ENCODE measurements at regions of chr16 and their contacts with region 1.

Region 1: GRCh38 chr16:57432989-57433388 is 14.2 kb downstream of the CIAPIN1 start:
- DNase-seq: peak in 2 of 9 donors; percentile 16 to 17
- ATAC-seq: no peak
- H3K4me3 ChIP-seq: no peak overlapping the region
- H3K4me3 Mint-ChIP-seq: peak overlapping the region in 8 of 10 donors; percentile 43 to 79 (median 70)
- H3K27ac ChIP-seq: peak overlapping the region; percentile 49
- H3K27ac Mint-ChIP-seq: peak overlapping the region in 8 of 9 donors; percentile 74 to 93 (median 88)
- H3K4me1 ChIP-seq: peaks cover 0 to 33% of the 10 kb centered on the region in 2 donors
- H3K4me1 Mint-ChIP-seq: peaks cover 0 to 48% (median 38%) of the 10 kb centered on the region in 7 donors
- H3K27me3 ChIP-seq: no peaks in the 10 kb centered on the region
- H3K27me3 Mint-ChIP-seq: no peaks in the 10 kb centered on the region

Region 2: GRCh38 chr16:57416122-57416509 is 16.9 kb before region 1 on chr16:
- CTCF ChIA-PET with region 1: interaction called, 43 read pairs
- POLR2A ChIA-PET with region 1: interaction called, 4 read pairs
- intact Hi-C with region 1: loop called in 1 of 2 experiments (anchors 1 kb)
- DNase-seq: no peak
- ATAC-seq: no peak
- H3K4me3 ChIP-seq: no peak overlapping the region
- H3K4me3 Mint-ChIP-seq: no peak overlapping the region
- H3K27ac ChIP-seq: no peak overlapping the region
- H3K27ac Mint-ChIP-seq: no peak overlapping the region
- H3K4me1 ChIP-seq: peaks cover 11 to 18% of the 10 kb centered on the region in 2 donors
- H3K4me1 Mint-ChIP-seq: peaks cover 17 to 29% (median 23%) of the 10 kb centered on the region in 7 donors
- H3K27me3 ChIP-seq: no peaks in the 10 kb centered on the region
- H3K27me3 Mint-ChIP-seq: no peaks in the 10 kb centered on the region

Region 3: DNA sequence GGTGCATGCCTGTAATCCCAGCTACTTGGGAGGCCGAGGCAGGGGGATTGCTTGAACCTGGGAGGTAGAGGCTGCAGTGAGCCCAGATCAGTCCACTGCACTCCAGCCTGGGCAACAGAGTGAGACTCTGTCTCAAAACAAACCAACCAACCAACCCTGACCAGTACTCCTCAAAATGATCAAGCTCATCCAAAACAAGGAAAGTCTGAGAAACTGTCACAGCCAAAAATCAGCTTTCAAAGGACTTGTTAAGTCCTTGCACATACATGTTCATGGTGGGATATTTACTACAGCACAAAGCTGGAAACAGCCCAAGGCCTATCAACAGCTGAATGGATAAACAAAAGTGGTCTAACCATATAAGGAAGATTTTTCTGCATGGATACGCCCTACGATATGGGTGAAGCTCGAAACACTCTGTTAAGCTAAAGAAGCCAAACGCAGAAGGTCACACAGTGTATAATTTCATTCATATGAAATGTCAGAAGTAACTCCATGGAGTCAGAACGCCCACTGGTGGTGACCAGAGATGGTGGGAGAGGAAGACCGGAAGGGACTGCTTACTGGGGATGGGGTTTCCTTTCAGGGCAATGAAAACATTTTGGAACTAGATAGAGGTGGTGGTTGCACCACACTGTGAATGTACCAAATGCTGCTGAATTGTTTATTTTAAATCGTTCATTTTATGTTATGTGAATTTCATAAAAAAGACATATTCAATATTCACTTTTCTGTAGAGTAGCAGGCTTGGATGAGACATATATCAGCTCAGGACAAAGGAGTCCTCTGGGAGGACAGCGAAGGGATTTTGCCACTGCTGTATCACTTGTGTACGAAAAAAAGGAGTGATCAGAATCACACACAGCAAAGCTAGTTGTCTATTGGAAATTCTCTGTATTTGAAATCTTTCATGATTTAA is 10.7 kb before region 1 on chr16:
- CTCF ChIA-PET with region 1: interaction called, 43 read pairs
- POLR2A ChIA-PET with region 1: interaction called, 4 read pairs
- intact Hi-C with region 1: loop called in 1 of 2 experiments (anchors 1 kb)
- DNase-seq: no peak
- ATAC-seq: no peak
- H3K4me3 ChIP-seq: no peak overlapping the region
- H3K4me3 Mint-ChIP-seq: no peak overlapping the region
- H3K27ac ChIP-seq: no peak overlapping the region
- H3K27ac Mint-ChIP-seq: peak overlapping the region in 1 of 9 donors; percentile 48
- H3K4me1 ChIP-seq: peaks cover 9 to 10% of the 10 kb centered on the region in 2 donors
- H3K4me1 Mint-ChIP-seq: peaks cover 11 to 29% (median 24%) of the 10 kb centered on the region in 7 donors
- H3K27me3 ChIP-seq: no peaks in the 10 kb centered on the region
- H3K27me3 Mint-ChIP-seq: no peaks in the 10 kb centered on the region

Region 4: DNA sequence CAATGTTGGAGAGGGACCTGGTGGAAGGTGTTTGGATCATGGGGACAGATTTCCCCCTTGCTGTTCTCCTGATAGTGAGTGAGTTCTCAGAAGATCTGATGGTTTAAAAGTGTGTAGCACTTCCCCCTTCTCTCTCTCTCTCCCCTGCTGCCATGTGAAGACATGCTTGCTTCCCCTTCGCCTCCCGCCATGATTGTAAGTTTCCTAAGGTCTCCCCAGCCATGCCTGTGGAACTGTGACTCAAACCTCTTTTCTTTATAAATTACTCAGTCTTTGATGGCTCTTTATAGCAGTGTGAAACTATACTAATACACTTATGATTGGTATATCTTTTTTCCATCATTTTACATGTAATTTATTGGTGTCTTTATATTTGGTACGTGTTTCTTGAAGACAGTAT is 122.8 kb after region 1 on chr16:
- CTCF ChIA-PET with region 1: no interaction called
- POLR2A ChIA-PET with region 1: no interaction called
- intact Hi-C with region 1: no loop called
- DNase-seq: no peak
- ATAC-seq: no peak
- H3K4me3 ChIP-seq: no peak overlapping the region
- H3K4me3 Mint-ChIP-seq: no peak overlapping the region
- H3K27ac ChIP-seq: no peak overlapping the region
- H3K27ac Mint-ChIP-seq: no peak overlapping the region
- H3K4me1 ChIP-seq: peaks cover 0 to 7% of the 10 kb centered on the region in 2 donors
- H3K4me1 Mint-ChIP-seq: peaks cover 6 to 41% (median 17%) of the 10 kb centered on the region in 7 donors
- H3K27me3 ChIP-seq: no peaks in the 10 kb centered on the region
- H3K27me3 Mint-ChIP-seq: peaks cover 0 to 13% (median 0%) of the 10 kb centered on the region in 5 donors